HCT116 (cell line): ENCODE measurements at regions of chr2 and their contacts with region 1.

Region 1: DNA sequence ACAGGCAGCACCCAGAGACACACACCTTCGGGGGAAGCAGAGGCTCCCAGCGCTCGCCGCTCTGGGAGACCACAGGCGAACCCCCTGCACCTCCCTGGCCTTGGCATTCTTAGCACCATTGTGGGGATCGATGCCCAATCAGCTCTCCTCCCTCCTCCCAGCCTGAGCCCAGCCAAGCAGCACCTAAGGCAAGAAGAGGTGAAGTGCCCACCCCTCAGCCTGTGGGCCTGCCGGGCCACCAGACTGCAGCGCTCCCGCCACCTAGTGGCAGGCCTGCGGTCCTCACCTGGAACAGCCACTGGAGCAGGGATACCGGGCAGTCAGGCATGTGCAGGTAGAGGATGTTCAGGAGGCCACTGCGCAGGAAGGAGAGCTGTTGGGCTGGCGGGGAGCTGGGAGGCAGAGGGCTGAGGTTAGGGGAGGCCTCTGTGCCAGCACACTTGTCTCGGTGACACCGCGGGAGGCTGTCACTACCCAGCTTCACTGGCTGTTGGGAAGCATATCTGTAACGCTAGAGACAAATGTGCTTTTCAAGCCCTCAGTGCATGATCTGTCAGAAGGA is 35.2 kb downstream of the FAM178B start:
- DNase-seq: peak; percentile 50
- ATAC-seq: peak; percentile 100
- H3K4me3 ChIP-seq: no peak overlapping the region
- H3K27ac ChIP-seq: no peak overlapping the region
- H3K4me1 ChIP-seq: peaks cover 0 to 6% of the 10 kb centered on the region in 2 experiments; a peak in 1 of 4 replicates
- H3K27me3 ChIP-seq: 0 out of 2 replicates have a peak, but pooled peaks cover 2% of the 10 kb centered on the region
- CTCF ChIP-seq: peak; percentile 91 to 95 (median 94)
- POLR2A ChIP-seq: no peak
- RAD21 ChIP-seq: peak; percentile 98

Region 2: GRCh38 chr2:96940001-96940615 is 11.1 kb before region 1 on chr2:
- CTCF ChIA-PET with region 1: interaction called, 11 read pairs
- POLR2A ChIA-PET with region 1: no interaction called
- RAD21 ChIA-PET with region 1: no interaction called
- intact Hi-C with region 1: no loop called
- DNase-seq: no peak
- ATAC-seq: no peak
- H3K4me3 ChIP-seq: no peak overlapping the region
- H3K27ac ChIP-seq: no peak overlapping the region
- H3K4me1 ChIP-seq: no peaks in the 10 kb centered on the region
- H3K27me3 ChIP-seq: no peaks in the 10 kb centered on the region
- CTCF ChIP-seq: no peak
- POLR2A ChIP-seq: no peak
- RAD21 ChIP-seq: no peak